Caco-2 (cell line): ENCODE measurements at regions of chr5 and their contacts with region 1.

Region 1: DNA sequence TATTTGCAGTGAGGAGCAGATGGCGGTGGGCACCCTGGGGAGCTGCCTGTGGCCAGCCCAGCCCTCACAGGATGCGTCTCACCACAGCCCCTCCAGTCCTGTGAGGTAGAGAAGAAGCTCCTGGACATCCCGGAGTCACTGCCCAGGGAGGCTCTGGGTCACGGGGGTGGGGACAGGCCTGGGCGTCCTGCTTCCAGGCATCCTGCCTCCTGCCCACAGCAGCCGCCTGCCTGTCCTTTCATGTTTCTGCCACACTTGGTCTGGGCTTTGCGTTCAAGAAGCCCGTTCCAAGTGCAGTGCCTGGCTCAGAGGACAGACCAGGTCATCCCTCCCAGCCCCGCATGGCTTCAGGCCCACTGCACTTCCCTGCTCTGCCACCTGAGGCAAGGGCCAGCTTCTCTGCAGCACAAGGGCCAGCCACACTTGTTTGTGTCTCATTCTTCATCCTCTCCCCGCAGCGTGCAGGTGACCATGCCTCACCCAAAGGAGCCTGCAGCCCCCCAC is 38.2 kb downstream of the ZDHHC11B start:
- DNase-seq: peak in 1 of 2 experiments; percentile 41
- H3K4me3 ChIP-seq: no peak overlapping the region
- H3K4me3 Mint-ChIP-seq: no peak overlapping the region
- H3K27ac Mint-ChIP-seq: no peak overlapping the region
- H3K4me1 ChIP-seq: no peaks in the 10 kb centered on the region
- H3K4me1 Mint-ChIP-seq: no peaks in the 10 kb centered on the region
- H3K27me3 ChIP-seq: no peaks in the 10 kb centered on the region
- H3K27me3 Mint-ChIP-seq: no peaks in the 10 kb centered on the region
- CTCF ChIP-seq: peak in 1 of 2 experiments; percentile 14

Region 2: GRCh38 chr5:821504-821903 is 75.2 kb after region 1 on chr5:
- CTCF ChIA-PET with region 1: no interaction called
- POLR2A ChIA-PET with region 1: no interaction called
- intact Hi-C with region 1: loop called (anchors 2 kb)
- DNase-seq: no peak
- H3K4me3 ChIP-seq: no peak overlapping the region
- H3K4me3 Mint-ChIP-seq: no peak overlapping the region
- H3K27ac Mint-ChIP-seq: no peak overlapping the region
- H3K4me1 ChIP-seq: no peaks in the 10 kb centered on the region
- H3K4me1 Mint-ChIP-seq: no peaks in the 10 kb centered on the region
- H3K27me3 ChIP-seq: peaks cover 1% of the 10 kb centered on the region; the same call in 1 of the 2 replicates
- H3K27me3 Mint-ChIP-seq: peaks cover 19% of the 10 kb centered on the region
- CTCF ChIP-seq: no peak